ENCODE measurements at regions of chr20 and their contacts with region 1.

Region 1: DNA sequence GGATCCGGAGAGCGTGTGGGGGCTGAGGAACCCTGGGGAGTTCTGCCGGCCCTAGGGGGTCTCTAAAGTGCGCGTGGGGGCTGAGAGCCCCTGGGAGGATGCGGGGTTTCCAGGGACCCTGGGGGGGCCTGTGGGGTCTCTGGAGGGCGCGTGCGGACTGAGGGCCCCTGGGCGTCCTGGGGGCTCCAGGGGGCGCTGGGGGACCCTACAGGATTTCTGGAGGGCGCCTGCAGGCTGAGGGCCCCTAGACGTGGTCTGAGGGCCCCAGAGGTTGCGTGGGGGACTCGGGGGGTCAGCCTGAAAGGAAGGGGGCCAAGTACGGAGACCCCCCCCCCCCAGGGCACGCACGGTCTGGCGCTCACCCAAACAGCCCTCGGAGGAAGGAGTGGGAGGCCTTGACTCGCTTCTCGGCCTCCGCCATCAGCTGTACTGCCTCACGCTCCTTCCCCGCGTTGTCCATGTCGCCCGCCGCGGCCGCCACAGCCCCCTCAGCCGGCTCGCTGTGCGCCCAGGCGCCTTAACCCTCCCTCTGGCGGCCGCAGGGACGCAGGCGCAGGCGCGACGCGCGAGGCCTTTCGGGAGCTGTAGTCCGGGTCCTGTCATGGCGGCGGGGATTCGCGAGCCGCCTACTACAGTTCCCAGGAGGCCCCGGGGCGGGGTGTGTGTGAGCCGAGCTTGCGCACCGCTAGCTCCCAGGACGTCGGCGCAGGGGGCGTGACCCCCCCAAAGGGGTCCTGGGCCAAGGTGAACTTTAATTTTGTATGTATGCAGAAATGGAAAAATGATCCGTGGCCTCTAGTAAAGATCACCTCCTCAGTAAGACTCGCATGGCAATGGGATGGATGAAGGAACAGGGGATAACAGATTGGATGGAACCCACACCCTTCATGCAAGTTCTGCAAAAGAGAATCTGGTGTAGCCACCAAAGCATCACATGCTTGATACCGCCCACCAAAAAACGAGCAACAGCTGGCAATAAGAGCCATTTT is at the start of gene NAPB:
- DNase-seq: peak; percentile 94 to 99 (median 96)

Region 2: GRCh38 chr20:23357767-23358591 is 63.3 kb before region 1 on chr20:
- intact Hi-C with region 1: loop called (anchors 1 kb)
- DNase-seq: peak; percentile 98 to 100 (median 100)

Measured in posterior cingulate gyrus (tissue), 11 donors.